IMR-90 (cell line): ENCODE measurements at regions of chr13 and their contacts with region 1.

Region 1: GRCh38 chr13:38349390-38350113 is at the start of gene UFM1:
- DNase-seq: peak; percentile 96
- ATAC-seq: peak; percentile 98
- H3K4me3 ChIP-seq: peak within 1 kb of the TSS; percentile 70
- H3K27ac ChIP-seq: peak within 1 kb of the TSS; percentile 89
- H3K4me1 ChIP-seq: peaks cover 2% of the 10 kb centered on the region
- H3K27me3 ChIP-seq: no peaks in the 10 kb centered on the region
- CTCF ChIP-seq: no peak
- POLR2A ChIP-seq: peak; percentile 95
- RAD21 ChIP-seq: no peak
- total RNA-seq, gene UFM1: 94.5 and 127 TPM in 2 replicates

Region 2: GRCh38 chr13:37029617-37030016 is 1319.9 kb before region 1 on chr13:
- CTCF ChIA-PET with region 1: no interaction called
- POLR2A ChIA-PET with region 1: no interaction called
- dilution Hi-C with region 1: no loop called
- in situ Hi-C with region 1: loop called (anchors 25 kb)
- intact Hi-C with region 1: no loop called
- DNase-seq: peak; percentile 45
- ATAC-seq: 0 out of 2 replicates have a peak, but pooled peaks have one; percentile 29
- H3K4me3 ChIP-seq: no peak overlapping the region
- H3K27ac ChIP-seq: no peak overlapping the region
- H3K4me1 ChIP-seq: no peaks in the 10 kb centered on the region
- H3K27me3 ChIP-seq: no peaks in the 10 kb centered on the region
- CTCF ChIP-seq: no peak
- POLR2A ChIP-seq: no peak
- RAD21 ChIP-seq: no peak

Region 3: DNA sequence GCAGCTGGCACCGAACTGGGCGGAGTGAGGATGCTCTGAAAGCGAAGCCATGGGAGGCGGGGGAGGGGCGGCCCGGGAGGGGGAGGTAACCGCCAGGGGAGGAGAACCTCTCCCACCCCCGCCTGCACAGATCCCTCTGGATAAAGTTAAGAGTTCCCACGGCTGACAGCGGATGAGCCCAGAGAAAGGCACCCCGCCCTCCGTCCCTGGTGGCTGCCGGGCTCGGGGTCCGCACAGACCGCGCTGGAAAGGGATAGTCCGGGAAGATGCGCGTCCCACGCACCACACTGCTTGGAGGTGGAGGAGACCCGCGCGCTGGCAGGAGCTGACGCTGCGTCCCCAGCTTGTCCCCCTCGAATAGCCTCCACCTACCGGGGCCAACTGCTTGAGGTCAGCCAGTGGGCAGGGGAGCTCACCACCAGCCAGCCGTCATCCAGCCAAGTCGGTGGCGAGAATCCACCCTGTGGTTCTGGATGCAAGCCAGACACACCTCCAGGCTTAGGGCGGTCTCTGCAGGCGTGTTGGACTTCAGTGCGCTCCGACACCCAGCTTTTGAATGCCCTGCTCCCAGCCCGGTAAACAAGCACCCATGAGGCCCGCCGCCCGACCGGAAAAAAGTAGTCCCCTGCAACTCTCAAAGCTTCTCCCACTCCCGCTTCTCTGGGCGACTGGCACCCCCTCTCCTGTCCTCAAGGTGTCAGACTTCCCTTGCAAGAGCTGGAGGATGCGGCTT is 479.6 kb before region 1 on chr13 and contains the start of gene TRPC4:
- CTCF ChIA-PET with region 1: no interaction called
- POLR2A ChIA-PET with region 1: no interaction called
- dilution Hi-C with region 1: no loop called
- in situ Hi-C with region 1: no loop called
- intact Hi-C with region 1: loop called (anchors 2 kb)
- DNase-seq: peak; percentile 59
- ATAC-seq: peak; percentile 55
- H3K4me3 ChIP-seq: peak within 1 kb of the TSS; percentile 55
- H3K27ac ChIP-seq: peak within 1 kb of the TSS; percentile 21; the same call in 1 of the 2 replicates
- H3K4me1 ChIP-seq: peaks cover 4% of the 10 kb centered on the region
- H3K27me3 ChIP-seq: no peaks in the 10 kb centered on the region
- CTCF ChIP-seq: peak; percentile 47
- POLR2A ChIP-seq: no peak
- RAD21 ChIP-seq: peak; percentile 56
- total RNA-seq, gene TRPC4: 5.2 and 5.3 TPM in 2 replicates

Region 4: GRCh38 chr13:38763439-38764381 is 414.2 kb after region 1 on chr13:
- CTCF ChIA-PET with region 1: no interaction called
- POLR2A ChIA-PET with region 1: no interaction called
- dilution Hi-C with region 1: no loop called
- in situ Hi-C with region 1: no loop called
- intact Hi-C with region 1: loop called (anchors 10 kb)
- DNase-seq: peak; percentile 33
- ATAC-seq: peak; percentile 84
- H3K4me3 ChIP-seq: no peak overlapping the region
- H3K27ac ChIP-seq: no peak overlapping the region
- H3K4me1 ChIP-seq: no peaks in the 10 kb centered on the region
- H3K27me3 ChIP-seq: no peaks in the 10 kb centered on the region
- CTCF ChIP-seq: peak; percentile 52
- POLR2A ChIP-seq: no peak
- RAD21 ChIP-seq: peak; percentile 47

Region 5: GRCh38 chr13:39297664-39298176 is 948.2 kb after region 1 on chr13:
- CTCF ChIA-PET with region 1: no interaction called
- POLR2A ChIA-PET with region 1: no interaction called
- dilution Hi-C with region 1: no loop called
- in situ Hi-C with region 1: no loop called
- intact Hi-C with region 1: no loop called
- DNase-seq: peak; percentile 24
- ATAC-seq: peak; percentile 91
- H3K4me3 ChIP-seq: no peak overlapping the region
- H3K27ac ChIP-seq: no peak overlapping the region
- H3K4me1 ChIP-seq: no peaks in the 10 kb centered on the region
- H3K27me3 ChIP-seq: no peaks in the 10 kb centered on the region
- CTCF ChIP-seq: no peak
- POLR2A ChIP-seq: no peak
- RAD21 ChIP-seq: no peak